CD14-positive monocyte (primary cell): ENCODE measurements at regions of chr5 and their contacts with region 1.

Region 1: GRCh38 chr5:1799602-1800471 is at the start of gene MRPL36:
- DNase-seq: peak; percentile 90 to 92 (median 92)
- H3K4me3 ChIP-seq: peak within 1 kb of the TSS; percentile 61 to 90 (median 82)
- H3K4me3 Mint-ChIP-seq: peak within 1 kb of the TSS; percentile 95 to 100
- H3K27ac ChIP-seq: peak within 1 kb of the TSS; percentile 60 to 91
- H3K27ac Mint-ChIP-seq: peak within 1 kb of the TSS; percentile 95 to 98 (median 98)
- H3K4me1 ChIP-seq: peaks cover 18 to 33% of the 10 kb centered on the region in 2 donors
- H3K4me1 Mint-ChIP-seq: peaks cover 40% of the 10 kb centered on the region
- H3K27me3 ChIP-seq: no peaks in the 10 kb centered on the region
- H3K27me3 Mint-ChIP-seq: peaks cover 0 to 2% (median 0%) of the 10 kb centered on the region in 3 donors
- CTCF ChIP-seq: no peak
- polyA plus RNA-seq, gene MRPL36: 17.9 to 81.7 (median 65.9) TPM

Region 2: GRCh38 chr5:885529-885928 is 914.3 kb before region 1 on chr5:
- intact Hi-C with region 1: loop called (anchors 10 kb)
- DNase-seq: no peak
- H3K4me3 ChIP-seq: no peak overlapping the region
- H3K4me3 Mint-ChIP-seq: no peak overlapping the region
- H3K27ac ChIP-seq: no peak overlapping the region
- H3K27ac Mint-ChIP-seq: peak overlapping the region in 2 of 7 donors; percentile 16 to 66
- H3K4me1 ChIP-seq: no peaks in the 10 kb centered on the region
- H3K4me1 Mint-ChIP-seq: peaks cover 7% of the 10 kb centered on the region
- H3K27me3 ChIP-seq: no peaks in the 10 kb centered on the region
- H3K27me3 Mint-ChIP-seq: peaks cover 0 to 2% (median 0%) of the 10 kb centered on the region in 3 donors
- CTCF ChIP-seq: no peak

Region 3: DNA sequence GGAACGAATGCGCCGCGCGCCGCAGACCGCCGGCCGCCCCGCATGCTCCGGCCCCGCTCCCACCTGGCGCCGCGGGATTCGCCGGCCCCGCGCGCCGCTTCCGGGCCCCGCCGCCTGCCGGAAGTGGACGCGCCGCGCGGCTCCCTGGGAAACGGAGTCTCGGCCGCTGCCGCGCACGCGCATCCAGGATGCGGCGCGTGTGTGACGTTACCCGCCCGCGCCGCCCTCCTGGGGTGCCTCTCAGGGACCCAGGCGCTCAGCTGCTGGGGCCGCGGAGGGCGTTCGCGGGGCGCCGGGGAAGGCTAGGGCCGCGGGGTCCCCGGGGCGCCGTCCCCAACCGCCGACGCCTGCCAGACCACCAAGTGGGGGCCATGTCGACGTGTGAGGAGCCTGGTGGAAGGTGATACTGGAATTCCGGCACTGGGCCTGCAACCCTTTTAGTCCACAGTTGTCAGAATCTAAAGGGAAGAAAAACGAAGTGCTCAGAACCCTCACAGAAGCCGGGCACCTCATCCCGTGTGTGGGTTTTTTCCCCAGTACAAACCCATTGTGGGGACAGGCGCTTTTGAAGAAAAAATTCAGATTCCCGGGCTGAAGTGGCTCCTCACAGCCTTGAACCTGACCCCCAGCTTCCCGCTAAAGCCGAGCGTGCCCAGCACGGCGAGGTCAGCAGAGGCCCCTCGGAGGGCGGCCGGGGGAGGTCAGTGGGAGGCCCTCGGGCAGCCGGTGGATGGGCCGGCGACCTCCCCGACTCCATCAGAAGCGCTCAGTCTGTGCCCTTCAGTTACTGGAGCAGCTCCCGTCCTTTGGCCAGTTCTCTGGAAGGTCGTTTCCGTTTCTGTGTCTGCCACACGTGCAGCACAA is 454.6 kb before region 1 on chr5 and contains the start of gene CLPTM1L:
- intact Hi-C with region 1: loop called (anchors 10 kb)
- DNase-seq: peak; percentile 87 to 88 (median 87)
- H3K4me3 ChIP-seq: peak within 1 kb of the TSS; percentile 87 to 97 (median 93)
- H3K4me3 Mint-ChIP-seq: peak within 1 kb of the TSS; percentile 85 to 90
- H3K27ac ChIP-seq: peak within 1 kb of the TSS; percentile 58 to 95
- H3K27ac Mint-ChIP-seq: peak within 1 kb of the TSS; percentile 19 to 84 (median 63)
- H3K4me1 ChIP-seq: peaks cover 16 to 30% of the 10 kb centered on the region in 2 donors
- H3K4me1 Mint-ChIP-seq: peaks cover 26% of the 10 kb centered on the region
- H3K27me3 ChIP-seq: no peaks in the 10 kb centered on the region
- H3K27me3 Mint-ChIP-seq: peaks cover 0 to 2% (median 0%) of the 10 kb centered on the region in 3 donors
- CTCF ChIP-seq: no peak
- polyA plus RNA-seq, gene CLPTM1L: 14.1 to 76.2 (median 35.0) TPM

Region 4: GRCh38 chr5:1351156-1351555 is 448.7 kb before region 1 on chr5:
- intact Hi-C with region 1: loop called (anchors 10 kb)
- DNase-seq: no peak
- H3K4me3 ChIP-seq: no peak overlapping the region
- H3K4me3 Mint-ChIP-seq: no peak overlapping the region
- H3K27ac ChIP-seq: no peak overlapping the region
- H3K27ac Mint-ChIP-seq: no peak overlapping the region
- H3K4me1 ChIP-seq: peaks cover 0 to 5% of the 10 kb centered on the region in 2 donors
- H3K4me1 Mint-ChIP-seq: peaks cover 7% of the 10 kb centered on the region
- H3K27me3 ChIP-seq: peaks cover 0 to 2% of the 10 kb centered on the region in 2 donors
- H3K27me3 Mint-ChIP-seq: peaks cover 9 to 15% (median 10%) of the 10 kb centered on the region in 3 donors
- CTCF ChIP-seq: no peak